Calu3 (cell line): ENCODE measurements at regions of chr1 and their contacts with region 1.

Region 1: DNA sequence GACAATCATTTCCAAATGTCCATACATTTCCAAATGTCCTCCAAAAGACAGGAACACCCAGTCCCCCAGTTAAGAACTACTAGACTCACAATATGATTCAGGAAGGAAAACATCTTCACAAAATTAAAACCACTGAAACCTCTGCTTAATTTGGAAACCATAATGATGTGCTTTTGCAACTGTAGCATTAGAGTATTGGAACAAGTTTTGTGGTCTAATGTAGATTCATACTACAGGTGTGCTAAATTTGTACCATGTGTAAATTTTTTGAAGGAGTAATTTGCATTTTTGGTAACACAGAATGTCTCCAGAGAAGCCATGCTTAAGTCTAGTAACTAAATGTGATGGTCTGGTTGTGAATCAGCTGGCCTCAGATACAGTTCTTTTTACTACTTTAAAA is 129.6 kb downstream of the DPYD start:
- DNase-seq: no peak
- H3K4me3 Mint-ChIP-seq: no peak overlapping the region
- H3K27ac Mint-ChIP-seq: no peak overlapping the region
- H3K4me1 Mint-ChIP-seq: peaks cover 3% of the 10 kb centered on the region
- H3K27me3 Mint-ChIP-seq: no peaks in the 10 kb centered on the region
- CTCF ChIP-seq: no peak

Region 2: GRCh38 chr1:98048244-98048643 is 257.0 kb after region 1 on chr1:
- CTCF ChIA-PET with region 1: no interaction called
- intact Hi-C with region 1: loop called (anchors 5 kb)
- DNase-seq: peak; percentile 75
- H3K4me3 Mint-ChIP-seq: no peak overlapping the region
- H3K27ac Mint-ChIP-seq: no peak overlapping the region
- H3K4me1 Mint-ChIP-seq: peaks cover 8% of the 10 kb centered on the region
- H3K27me3 Mint-ChIP-seq: no peaks in the 10 kb centered on the region
- CTCF ChIP-seq: no peak